Mucosa of descending colon (tissue), 3 donors: ENCODE measurements at regions of chr3 and their contacts with region 1.

Region 1: DNA sequence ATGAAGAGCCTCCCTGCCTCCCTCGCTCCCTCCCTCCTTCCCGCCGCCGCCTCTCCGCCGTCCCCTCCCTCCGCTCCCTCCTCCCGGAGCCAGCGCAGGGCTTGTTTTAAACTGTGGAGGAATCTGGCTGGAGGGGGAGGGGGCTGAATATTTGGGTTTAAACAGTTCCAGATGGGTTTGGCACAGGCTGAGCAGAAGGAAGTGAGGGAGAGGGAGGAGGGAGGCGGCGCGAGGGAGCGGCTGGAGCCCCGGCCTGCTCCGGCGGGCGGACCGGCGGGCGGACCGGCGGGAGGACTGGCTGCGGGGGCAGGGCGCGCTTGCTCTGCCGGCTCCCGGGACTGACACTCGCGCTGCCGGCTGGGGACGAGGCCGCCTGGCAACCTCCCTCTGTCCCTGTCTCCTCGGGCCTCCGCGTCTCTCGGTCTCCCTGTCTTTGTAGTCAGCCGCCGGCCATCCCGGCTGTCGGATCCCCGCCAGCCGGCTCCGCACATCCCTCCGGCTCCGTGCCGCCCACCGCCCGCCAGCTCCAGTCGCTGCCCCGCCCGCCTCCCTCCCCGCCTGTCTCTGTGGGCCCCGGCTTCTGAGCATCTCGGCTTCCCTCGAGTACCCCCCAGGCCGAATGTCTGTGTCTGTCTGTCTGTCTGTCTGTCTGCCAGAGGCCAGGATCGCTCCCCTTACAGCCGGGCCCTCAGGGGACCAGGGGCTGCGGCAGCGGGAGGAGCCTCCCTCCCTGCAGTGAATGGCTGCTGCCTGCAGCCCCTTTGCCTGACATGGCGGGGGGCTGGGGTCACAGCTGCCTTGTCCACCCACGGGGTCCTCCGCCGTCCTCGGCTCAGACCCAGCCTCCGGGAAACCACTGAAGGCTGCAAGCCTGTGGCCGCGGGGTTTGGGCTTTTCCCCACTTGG is 7.6 kb downstream of the EPHB3 start:
- DNase-seq: peak; percentile 77 to 83 (median 83)
- ATAC-seq: peak; percentile 48
- H3K4me3 ChIP-seq: no peak overlapping the region
- H3K4me1 ChIP-seq: peaks cover 46% of the 10 kb centered on the region
- CTCF ChIP-seq: no peak

Region 2: DNA sequence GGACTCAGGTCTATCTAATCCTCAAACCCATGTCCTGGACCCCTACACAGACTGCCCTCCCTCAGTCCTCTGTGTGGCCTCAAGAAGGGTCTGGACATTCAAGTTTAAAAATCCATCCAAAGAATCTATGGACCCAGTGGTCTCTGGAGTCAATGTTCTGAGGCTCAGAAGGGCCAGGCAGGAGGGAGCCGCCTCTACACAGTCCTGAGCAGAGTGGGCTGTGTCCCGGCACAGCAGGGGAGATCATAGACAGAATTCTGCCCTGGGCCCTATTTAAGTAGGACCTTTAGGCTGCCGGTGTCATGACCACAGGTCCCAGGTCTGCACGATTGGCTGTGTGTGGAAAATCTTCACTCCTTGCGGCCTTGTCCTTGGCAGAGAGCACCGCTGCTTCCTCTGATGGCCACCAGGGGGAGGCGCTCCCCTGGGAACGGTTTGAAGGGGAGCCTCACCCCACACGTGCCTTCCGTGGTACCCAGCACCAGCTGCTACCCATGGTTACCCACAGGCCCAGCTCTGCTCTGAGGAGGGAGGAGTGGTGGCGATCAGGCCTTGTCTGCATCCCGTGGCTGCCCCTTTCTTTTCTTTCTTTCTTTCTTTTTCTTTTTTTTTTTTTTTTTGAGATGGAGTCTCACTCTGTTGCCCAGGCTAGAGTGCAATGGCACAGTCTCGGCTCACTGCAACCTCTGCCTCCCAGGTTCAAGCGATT is 151.4 kb before region 1 on chr3:
- intact Hi-C with region 1: no loop called
- DNase-seq: peak; percentile 64 to 82 (median 81)
- ATAC-seq: peak; percentile 95
- H3K4me3 ChIP-seq: no peak overlapping the region
- H3K4me1 ChIP-seq: no peaks in the 10 kb centered on the region
- CTCF ChIP-seq: peak; percentile 81

Region 3: DNA sequence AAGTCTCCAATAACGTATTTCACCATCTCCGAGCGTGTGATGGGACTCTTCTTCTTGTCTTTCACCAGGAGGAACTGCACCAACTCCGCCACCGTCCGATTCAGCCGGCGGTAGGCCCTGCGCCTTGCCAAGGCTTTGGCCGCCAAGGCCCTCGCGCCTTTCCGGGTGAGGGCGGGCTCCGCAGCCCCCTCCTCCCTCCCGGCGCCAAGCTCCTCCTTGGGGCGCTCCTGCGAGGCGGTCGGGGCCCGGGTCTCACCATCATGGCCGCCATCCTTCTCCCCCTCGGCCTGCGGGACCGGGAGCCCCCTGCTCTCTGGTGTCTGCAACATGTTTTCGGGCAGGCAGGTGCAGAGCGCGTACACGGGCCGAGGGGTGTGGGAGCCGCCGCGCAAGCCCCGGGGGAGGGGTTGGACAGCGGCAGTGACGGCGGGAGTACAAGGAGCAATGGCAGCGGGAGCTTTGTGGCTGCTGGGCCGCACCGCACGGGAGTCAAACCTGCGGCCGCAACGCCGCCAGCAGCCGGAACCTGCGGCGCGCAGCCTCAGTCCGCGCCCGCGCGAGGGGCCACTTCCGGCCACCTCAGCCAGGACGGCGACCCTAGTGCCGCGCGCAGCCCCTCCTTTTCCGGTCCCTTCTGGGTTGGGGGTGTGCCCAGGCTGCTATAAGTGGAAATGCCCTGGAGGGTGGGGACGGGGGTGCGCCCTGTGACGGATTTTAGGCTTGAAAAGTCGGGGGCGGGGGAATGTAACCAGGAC is 142.5 kb after region 1 on chr3 and contains the start of gene MAGEF1:
- intact Hi-C with region 1: loop called in 1 of 2 experiments (anchors 5 kb)
- DNase-seq: peak; percentile 82 to 89 (median 88)
- ATAC-seq: peak; percentile 92
- H3K4me3 ChIP-seq: peak within 1 kb of the TSS; percentile 84
- H3K4me1 ChIP-seq: peaks cover 13% of the 10 kb centered on the region
- CTCF ChIP-seq: no peak
- total RNA-seq, gene MAGEF1: 17.3 to 30.2 (median 24.4) TPM